SK-N-SH (cell line): ENCODE measurements at regions of chr17 and their contacts with region 1.

Region 1: DNA sequence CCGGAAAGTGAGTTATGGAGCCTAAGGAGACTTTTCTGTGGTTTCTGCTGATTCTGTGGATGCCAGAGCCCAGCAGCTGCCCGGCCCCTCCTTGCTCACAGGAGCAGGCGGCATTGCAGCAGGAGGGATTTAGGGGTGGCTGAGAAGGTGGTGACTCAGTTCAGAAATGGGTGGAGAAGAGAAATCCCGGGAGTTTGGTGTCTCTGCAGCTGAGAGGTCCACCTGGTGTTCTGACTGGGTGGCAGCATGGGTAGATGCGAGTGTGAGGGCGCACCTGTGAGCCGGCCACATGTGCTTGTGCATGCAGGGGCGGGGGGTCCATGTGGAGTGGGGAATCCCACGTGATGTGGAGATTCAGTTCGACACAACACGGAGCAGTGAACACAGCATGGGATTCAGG is 16.1 kb upstream of the SPPL2C start:
- DNase-seq: peak; percentile 74
- H3K4me3 ChIP-seq: no peak overlapping the region; a peak in 1 of 4 replicates
- H3K27ac ChIP-seq: peak overlapping the region in 1 of 2 experiments; percentile 94; a peak in 2 of 4 replicates
- H3K4me1 ChIP-seq: peaks cover 0 to 62% of the 10 kb centered on the region in 2 experiments; a peak in 3 of 4 replicates
- H3K27me3 ChIP-seq: no peaks in the 10 kb centered on the region
- CTCF ChIP-seq: no peak
- EP300 ChIP-seq: no peak
- RAD21 ChIP-seq: peak; percentile 15; the same call in 1 of the 2 replicates

Region 2: GRCh38 chr17:45073414-45074070 is 755.1 kb before region 1 on chr17:
- CTCF ChIA-PET with region 1: no interaction called
- POLR2A ChIA-PET with region 1: no interaction called
- DNase-seq: no peak
- H3K4me3 ChIP-seq: no peak overlapping the region
- H3K27ac ChIP-seq: peak overlapping the region in 1 of 2 experiments; percentile 29; a peak in 1 of 4 replicates
- H3K4me1 ChIP-seq: peaks cover 0 to 3% of the 10 kb centered on the region in 2 experiments; a peak in 2 of 4 replicates
- H3K27me3 ChIP-seq: no peaks in the 10 kb centered on the region
- CTCF ChIP-seq: no peak
- EP300 ChIP-seq: no peak
- RAD21 ChIP-seq: no peak

Region 3: GRCh38 chr17:45640141-45640850 is 188.3 kb before region 1 on chr17:
- CTCF ChIA-PET with region 1: interaction called, 211 read pairs
- POLR2A ChIA-PET with region 1: interaction called, 3 read pairs
- DNase-seq: peak; percentile 82
- H3K4me3 ChIP-seq: no peak overlapping the region; a peak in 1 of 4 replicates
- H3K27ac ChIP-seq: no peak overlapping the region
- H3K4me1 ChIP-seq: no peaks in the 10 kb centered on the region
- H3K27me3 ChIP-seq: no peaks in the 10 kb centered on the region
- CTCF ChIP-seq: peak; percentile 98
- EP300 ChIP-seq: no peak
- RAD21 ChIP-seq: peak; percentile 95

Region 4: GRCh38 chr17:45666046-45666600 is 162.5 kb before region 1 on chr17:
- CTCF ChIA-PET with region 1: interaction called, 25 read pairs
- POLR2A ChIA-PET with region 1: no interaction called
- DNase-seq: no peak
- H3K4me3 ChIP-seq: no peak overlapping the region
- H3K27ac ChIP-seq: no peak overlapping the region
- H3K4me1 ChIP-seq: no peaks in the 10 kb centered on the region
- H3K27me3 ChIP-seq: peaks cover 23% of the 10 kb centered on the region
- CTCF ChIP-seq: no peak
- EP300 ChIP-seq: no peak
- RAD21 ChIP-seq: peak; percentile 60

Region 5: DNA sequence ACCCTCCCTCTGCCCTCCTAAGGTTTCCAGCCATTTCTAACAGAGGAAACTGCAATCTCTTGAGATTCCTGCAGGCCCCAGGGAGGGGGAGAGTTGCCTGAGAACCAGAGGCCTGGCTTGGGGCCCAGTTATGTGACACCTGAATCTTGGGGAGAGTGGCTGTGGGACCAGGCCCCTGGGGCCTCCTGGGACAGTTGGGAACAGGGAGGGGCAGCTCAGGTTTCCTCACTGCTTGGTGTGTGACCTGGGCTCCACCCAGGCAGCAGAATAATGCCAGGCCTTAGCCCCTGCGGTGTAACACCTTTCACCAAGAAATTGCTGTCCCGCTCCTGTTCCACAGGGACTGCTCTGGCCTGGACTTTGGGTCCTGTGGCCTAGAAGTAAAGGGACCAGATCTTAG is 88.8 kb before region 1 on chr17:
- CTCF ChIA-PET with region 1: interaction called, 26 read pairs
- POLR2A ChIA-PET with region 1: interaction called, 4 read pairs
- DNase-seq: no peak
- H3K4me3 ChIP-seq: no peak overlapping the region
- H3K27ac ChIP-seq: no peak overlapping the region
- H3K4me1 ChIP-seq: peaks cover 0 to 7% of the 10 kb centered on the region in 2 experiments; a peak in 1 of 4 replicates
- H3K27me3 ChIP-seq: 0 out of 2 replicates have a peak, but pooled peaks cover 27% of the 10 kb centered on the region
- CTCF ChIP-seq: no peak
- EP300 ChIP-seq: no peak
- RAD21 ChIP-seq: no peak

Region 6: DNA sequence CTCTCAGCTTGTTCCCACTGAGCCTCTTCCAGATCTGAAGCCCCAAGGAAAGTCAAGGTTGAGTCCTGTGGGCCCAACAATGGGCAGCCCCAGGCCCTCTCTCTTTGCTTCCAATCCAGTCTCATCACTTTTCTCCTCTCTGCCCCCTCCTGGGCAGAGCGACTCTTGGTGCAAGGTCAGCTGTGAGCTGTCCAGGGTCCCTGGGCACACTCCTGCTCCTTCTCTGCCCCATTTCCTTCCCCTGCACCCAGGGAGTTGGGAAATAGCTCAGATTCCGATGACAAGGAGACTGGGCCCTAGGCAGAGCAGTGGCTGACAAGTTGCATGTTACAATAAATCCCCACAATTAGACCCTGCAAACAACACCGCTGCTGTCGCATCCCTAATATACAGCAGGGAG is 60.6 kb before region 1 on chr17:
- CTCF ChIA-PET with region 1: interaction called, 10 read pairs
- POLR2A ChIA-PET with region 1: no interaction called
- DNase-seq: no peak
- H3K4me3 ChIP-seq: no peak overlapping the region
- H3K27ac ChIP-seq: no peak overlapping the region
- H3K4me1 ChIP-seq: peaks cover 0 to 3% of the 10 kb centered on the region in 2 experiments; a peak in 1 of 4 replicates
- H3K27me3 ChIP-seq: no peaks in the 10 kb centered on the region
- CTCF ChIP-seq: peak; percentile 13; the same call in 1 of the 2 replicates
- EP300 ChIP-seq: no peak
- RAD21 ChIP-seq: no peak

Region 7: GRCh38 chr17:45801421-45801820 is 27.2 kb before region 1 on chr17:
- CTCF ChIA-PET with region 1: interaction called, 14 read pairs
- POLR2A ChIA-PET with region 1: no interaction called
- DNase-seq: no peak
- H3K4me3 ChIP-seq: no peak overlapping the region
- H3K27ac ChIP-seq: no peak overlapping the region
- H3K4me1 ChIP-seq: no peaks in the 10 kb centered on the region
- H3K27me3 ChIP-seq: peaks cover 22% of the 10 kb centered on the region; the same call in 1 of the 2 replicates
- CTCF ChIP-seq: no peak
- EP300 ChIP-seq: no peak
- RAD21 ChIP-seq: no peak

Region 8: GRCh38 chr17:45857977-45858709 is 29.5 kb after region 1 on chr17:
- CTCF ChIA-PET with region 1: interaction called, 327 read pairs
- POLR2A ChIA-PET with region 1: no interaction called
- DNase-seq: no peak
- H3K4me3 ChIP-seq: no peak overlapping the region
- H3K27ac ChIP-seq: no peak overlapping the region
- H3K4me1 ChIP-seq: peaks cover 0 to 12% of the 10 kb centered on the region in 2 experiments; a peak in 1 of 4 replicates
- H3K27me3 ChIP-seq: 0 out of 2 replicates have a peak, but pooled peaks cover 8% of the 10 kb centered on the region
- CTCF ChIP-seq: no peak
- EP300 ChIP-seq: no peak
- RAD21 ChIP-seq: no peak

Region 9: GRCh38 chr17:45984368-45984767 is 155.7 kb after region 1 on chr17:
- CTCF ChIA-PET with region 1: no interaction called
- POLR2A ChIA-PET with region 1: no interaction called
- DNase-seq: no peak
- H3K4me3 ChIP-seq: no peak overlapping the region
- H3K27ac ChIP-seq: no peak overlapping the region
- H3K4me1 ChIP-seq: no peaks in the 10 kb centered on the region; a peak in 1 of 4 replicates
- H3K27me3 ChIP-seq: peaks cover 7% of the 10 kb centered on the region; the same call in 1 of the 2 replicates
- CTCF ChIP-seq: no peak
- EP300 ChIP-seq: no peak
- RAD21 ChIP-seq: no peak

Region 10: GRCh38 chr17:46013502-46014165 is 185.0 kb after region 1 on chr17:
- CTCF ChIA-PET with region 1: no interaction called
- POLR2A ChIA-PET with region 1: no interaction called
- DNase-seq: peak; percentile 65
- H3K4me3 ChIP-seq: no peak overlapping the region
- H3K27ac ChIP-seq: peak overlapping the region in 1 of 2 experiments; percentile 70; a peak in 2 of 4 replicates
- H3K4me1 ChIP-seq: peaks cover 0 to 23% of the 10 kb centered on the region in 2 experiments; a peak in 1 of 4 replicates
- H3K27me3 ChIP-seq: no peaks in the 10 kb centered on the region
- CTCF ChIP-seq: no peak
- EP300 ChIP-seq: 0 out of 4 replicates have a peak, but pooled peaks of 1 of the 2 experiments have one; percentile 2
- RAD21 ChIP-seq: no peak